Right ventricle myocardium inferior (tissue), 1 donor: ENCODE measurements at regions of chr3 and their contacts with region 1.

Region 1: DNA sequence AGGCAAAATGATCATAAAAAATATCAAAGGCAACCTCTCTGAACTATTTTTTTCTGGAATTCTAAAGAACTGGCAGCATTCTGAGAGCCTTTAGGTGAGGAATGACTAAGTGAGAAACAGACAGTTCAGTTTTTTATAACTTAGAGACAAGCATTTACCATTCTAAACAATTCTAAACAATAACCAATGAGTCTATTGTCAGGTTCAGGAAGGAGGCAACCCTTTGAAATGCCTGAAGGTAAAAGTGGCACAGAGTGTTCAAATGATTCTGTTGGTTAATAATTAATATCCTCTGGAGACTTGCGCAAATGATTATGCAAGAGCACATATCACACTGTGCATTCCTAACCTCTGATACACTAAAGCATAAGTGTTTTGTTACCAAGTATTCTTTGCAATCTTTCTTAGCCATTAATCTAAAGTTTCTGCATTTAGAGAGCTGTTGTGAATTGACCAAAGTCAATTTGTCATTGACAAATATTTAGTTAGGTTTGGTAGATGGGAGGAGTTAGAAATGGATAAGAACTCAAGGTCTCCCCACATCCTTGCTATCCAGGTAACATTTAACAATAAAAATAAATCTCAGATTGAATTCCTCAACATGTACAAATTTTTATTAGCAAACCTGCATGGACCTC is 9.2 kb upstream of the TGFBR2 start:
- DNase-seq: no peak
- ATAC-seq: peak; percentile 95

Region 2: DNA sequence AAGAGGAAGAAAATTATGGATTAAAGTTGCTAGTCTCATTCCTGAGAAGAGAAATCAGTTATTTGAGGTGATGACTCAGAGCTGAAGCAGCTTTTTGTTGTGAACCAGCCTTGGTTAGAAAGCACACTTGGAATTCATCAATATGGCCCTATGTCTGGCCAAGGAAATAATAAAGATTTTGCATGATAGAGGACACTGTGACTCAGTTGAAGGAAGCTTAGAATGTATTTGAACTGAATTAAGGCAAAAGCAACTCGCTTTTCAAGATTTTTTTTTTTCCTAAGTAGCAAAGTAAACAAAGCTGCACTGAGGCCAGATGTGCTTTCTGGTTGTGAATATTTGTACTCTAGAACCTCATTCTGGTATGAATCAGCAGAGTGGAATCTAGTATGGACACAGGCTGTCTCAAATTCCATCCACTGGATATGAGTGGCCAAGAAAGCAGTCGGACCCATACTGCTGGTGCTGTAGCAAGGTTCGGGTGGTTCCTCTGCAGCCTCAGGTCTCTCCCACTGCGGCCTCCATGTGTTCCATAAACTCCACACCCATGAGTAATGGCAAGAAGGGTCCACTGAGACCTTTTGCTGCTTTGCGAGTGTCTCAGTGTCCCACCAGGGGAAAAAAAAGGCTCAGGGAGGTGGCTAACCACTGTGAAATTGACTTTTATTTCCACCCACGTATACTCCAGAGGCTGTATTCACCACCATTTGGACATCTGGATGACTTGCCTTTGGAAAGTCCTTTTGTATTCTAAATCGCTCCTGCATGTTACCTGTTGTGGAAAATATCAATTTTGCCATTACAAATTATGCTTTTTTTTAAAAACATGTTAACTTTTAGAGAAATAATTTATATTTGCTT is 62.2 kb after region 1 on chr3:
- intact Hi-C with region 1: loop called (anchors 5 kb)
- DNase-seq: no peak
- ATAC-seq: peak; percentile 40